Activated B cell treated with CpG ODN at 0.5 μM for 24 hours (primary cell): ENCODE measurements at regions of chr16 and their contacts with region 1.

Region 1: GRCh38 chr16:4253394-4254150 is 11.7 kb upstream of the SRL start:
- DNase-seq: peak; percentile 98
- ATAC-seq: peak; percentile 96
- H3K4me3 Mint-ChIP-seq: peak overlapping the region; percentile 96
- H3K27ac Mint-ChIP-seq: peak overlapping the region; percentile 97
- H3K4me1 Mint-ChIP-seq: peaks cover 6% of the 10 kb centered on the region
- H3K27me3 Mint-ChIP-seq: no peaks in the 10 kb centered on the region
- CTCF ChIP-seq: no peak

Region 2: DNA sequence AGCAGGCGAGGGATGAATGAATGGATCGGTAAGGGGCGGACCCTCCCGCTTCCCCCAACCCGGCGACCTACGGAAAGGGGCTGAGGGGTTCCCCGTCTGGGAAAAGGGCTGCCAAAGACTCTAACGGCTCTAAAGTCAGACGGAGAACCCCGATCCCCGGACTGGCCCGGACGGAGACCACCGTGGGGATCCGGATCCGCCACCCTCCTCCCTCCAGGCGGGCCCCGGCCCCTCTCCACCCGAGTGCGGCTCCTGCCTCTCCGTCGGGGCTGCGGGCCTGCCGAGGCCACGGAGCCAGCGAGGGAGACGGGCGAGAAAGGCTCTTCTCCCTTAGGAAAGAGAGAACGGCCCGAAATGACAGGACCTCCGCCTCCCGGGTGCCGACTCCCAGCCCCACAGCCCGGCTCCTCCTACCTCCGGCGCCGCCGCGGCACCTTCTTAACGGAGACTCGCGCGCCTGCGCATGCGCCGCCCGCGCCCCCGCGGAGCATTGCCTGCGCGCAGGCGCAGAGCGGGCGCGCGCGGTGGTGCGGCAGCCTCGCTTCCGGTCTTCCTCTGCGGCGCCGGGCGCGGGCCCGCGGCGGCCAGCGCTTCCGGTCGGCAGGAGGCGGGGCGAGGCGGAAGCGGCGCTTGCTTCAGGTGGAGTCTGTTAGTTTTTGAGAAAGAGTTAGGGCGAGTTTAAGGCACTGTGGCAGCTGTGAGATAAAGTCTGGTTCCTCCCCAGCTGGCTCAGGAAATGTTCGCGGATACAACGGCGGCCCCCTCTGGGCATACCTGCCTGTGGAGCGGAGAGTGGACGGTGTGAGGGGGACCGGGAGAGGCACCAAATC is 642.2 kb before region 1 on chr16 and contains the start of gene SLX4:
- CTCF ChIA-PET with region 1: no interaction called
- POLR2A ChIA-PET with region 1: no interaction called
- intact Hi-C with region 1: loop called (anchors 2 kb)
- DNase-seq: peak; percentile 95
- ATAC-seq: peak; percentile 85
- H3K4me3 Mint-ChIP-seq: peak within 1 kb of the TSS; percentile 100
- H3K27ac Mint-ChIP-seq: peak within 1 kb of the TSS; percentile 96
- H3K4me1 Mint-ChIP-seq: peaks cover 60% of the 10 kb centered on the region
- H3K27me3 Mint-ChIP-seq: no peaks in the 10 kb centered on the region
- CTCF ChIP-seq: no peak
- total RNA-seq, gene SLX4: 11.4 and 13.0 TPM in 2 replicates

Region 3: GRCh38 chr16:3787924-3788661 is 465.5 kb before region 1 on chr16:
- CTCF ChIA-PET with region 1: interaction called, 3 read pairs
- POLR2A ChIA-PET with region 1: no interaction called
- intact Hi-C with region 1: loop called (anchors 5 kb)
- DNase-seq: peak; percentile 36
- ATAC-seq: peak; percentile 97
- H3K4me3 Mint-ChIP-seq: peak overlapping the region; percentile 41
- H3K27ac Mint-ChIP-seq: peak overlapping the region; percentile 71
- H3K4me1 Mint-ChIP-seq: peaks cover 41% of the 10 kb centered on the region
- H3K27me3 Mint-ChIP-seq: no peaks in the 10 kb centered on the region
- CTCF ChIP-seq: no peak

Region 4: GRCh38 chr16:3983081-3983520 is 270.5 kb before region 1 on chr16:
- CTCF ChIA-PET with region 1: interaction called, 9 read pairs
- POLR2A ChIA-PET with region 1: no interaction called
- intact Hi-C with region 1: loop called (anchors 1 kb)
- DNase-seq: no peak
- ATAC-seq: no peak
- H3K4me3 Mint-ChIP-seq: no peak overlapping the region
- H3K27ac Mint-ChIP-seq: no peak overlapping the region
- H3K4me1 Mint-ChIP-seq: no peaks in the 10 kb centered on the region
- H3K27me3 Mint-ChIP-seq: peaks cover 11% of the 10 kb centered on the region
- CTCF ChIP-seq: no peak

Region 5: DNA sequence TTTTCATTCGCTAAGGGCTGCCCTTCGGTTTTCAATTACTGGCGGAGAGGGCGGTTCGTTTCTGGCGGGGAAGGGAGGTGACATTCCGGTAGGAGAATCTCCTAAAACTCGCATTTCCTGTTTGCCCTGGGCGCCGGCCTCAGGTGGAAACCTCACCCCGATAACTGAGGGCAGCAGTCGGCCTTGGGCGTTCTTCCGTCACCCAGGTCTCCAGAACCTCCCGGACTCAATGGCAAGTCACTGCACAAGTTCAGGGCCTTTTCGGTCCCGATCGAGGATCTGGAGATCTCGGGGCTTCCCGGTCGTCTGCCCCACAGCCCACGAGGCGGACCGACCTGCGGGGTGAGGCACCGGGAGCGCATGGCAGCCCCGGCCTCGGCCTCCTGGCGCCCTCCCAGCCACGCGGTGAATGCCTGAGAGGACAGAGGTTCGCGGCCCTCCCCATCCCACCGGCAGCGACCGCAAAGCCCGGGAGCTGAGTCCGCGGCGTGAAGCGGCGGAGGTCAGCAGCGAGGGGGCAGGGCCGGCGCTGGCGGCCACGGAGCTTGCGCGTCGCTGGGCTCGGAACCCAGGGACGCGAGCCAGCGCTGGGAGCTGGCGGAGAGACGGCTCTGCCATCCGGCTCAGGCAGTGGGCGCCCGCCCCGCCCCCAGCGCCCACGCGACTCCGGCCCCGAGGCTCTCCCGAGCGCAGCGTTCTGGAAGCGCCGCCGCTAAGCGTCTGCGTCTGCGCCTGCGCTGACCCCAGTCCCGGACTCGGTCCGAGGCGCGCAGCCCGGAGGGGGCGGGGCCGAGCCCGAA is 70.1 kb before region 1 on chr16:
- CTCF ChIA-PET with region 1: no interaction called
- POLR2A ChIA-PET with region 1: interaction called, 4 read pairs
- intact Hi-C with region 1: loop called (anchors 2 kb)
- DNase-seq: peak; percentile 92
- ATAC-seq: peak; percentile 96
- H3K4me3 Mint-ChIP-seq: peak overlapping the region; percentile 81
- H3K27ac Mint-ChIP-seq: peak overlapping the region; percentile 30
- H3K4me1 Mint-ChIP-seq: peaks cover 5% of the 10 kb centered on the region
- H3K27me3 Mint-ChIP-seq: peaks cover 2% of the 10 kb centered on the region
- CTCF ChIP-seq: no peak

Region 6: DNA sequence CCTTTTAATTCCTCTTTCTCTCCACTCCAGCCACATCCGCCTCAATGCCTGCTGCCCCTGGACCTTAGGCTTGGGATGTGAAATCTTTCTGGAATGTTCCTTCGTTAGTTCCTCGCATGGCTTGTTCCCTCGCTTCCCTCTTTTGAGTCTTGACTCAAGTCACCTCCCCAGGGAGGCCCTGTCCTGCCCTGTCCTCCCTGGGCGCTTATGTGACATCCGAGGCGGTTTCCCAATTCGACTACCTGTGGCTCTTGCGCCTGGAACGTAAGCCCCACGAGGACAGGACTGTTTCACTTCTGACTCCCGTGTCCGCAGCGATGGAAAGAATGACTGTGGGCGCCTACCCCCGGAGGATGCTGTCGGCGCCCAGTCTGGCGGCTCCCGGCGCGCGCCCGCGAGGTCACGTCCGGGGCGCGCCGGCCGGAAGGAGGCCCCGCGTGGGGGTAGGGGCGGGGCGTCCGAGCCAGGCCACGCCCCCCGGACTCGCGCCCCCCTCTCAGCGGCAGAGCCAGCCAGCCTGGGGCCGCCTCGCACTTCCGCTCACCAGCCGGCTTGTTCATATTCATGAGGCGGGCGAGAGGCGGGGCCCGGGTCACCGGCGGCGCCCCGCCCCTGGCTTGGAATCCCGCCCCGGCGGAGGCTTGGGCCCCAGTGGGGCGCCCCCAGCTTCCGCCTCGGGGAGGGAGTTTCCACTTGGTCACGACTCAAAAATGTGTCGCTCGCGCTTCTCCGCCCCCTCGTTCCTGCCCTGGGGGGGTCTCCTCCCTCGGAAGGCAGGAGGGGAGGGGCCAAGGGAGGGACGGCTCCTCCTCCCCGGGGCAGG is 53.9 kb after region 1 on chr16:
- CTCF ChIA-PET with region 1: interaction called, 7 read pairs
- POLR2A ChIA-PET with region 1: interaction called, 8 read pairs
- intact Hi-C with region 1: loop called (anchors 1 kb)
- DNase-seq: peak; percentile 98
- ATAC-seq: peak; percentile 86
- H3K4me3 Mint-ChIP-seq: peak overlapping the region; percentile 91
- H3K27ac Mint-ChIP-seq: peak overlapping the region; percentile 95
- H3K4me1 Mint-ChIP-seq: peaks cover 25% of the 10 kb centered on the region
- H3K27me3 Mint-ChIP-seq: no peaks in the 10 kb centered on the region
- CTCF ChIP-seq: no peak